ENCODE measurements at regions of chr1 and their contacts with region 1.

Region 1: GRCh38 chr1:20100632-20101355 is 18.5 kb downstream of the PLA2G2D start:
- DNase-seq: peak; percentile 77
- ATAC-seq: peak; percentile 79
- H3K4me3 ChIP-seq: no peak overlapping the region
- H3K27ac ChIP-seq: no peak overlapping the region
- H3K4me1 ChIP-seq: peaks cover 24% of the 10 kb centered on the region
- H3K27me3 ChIP-seq: no peaks in the 10 kb centered on the region
- CTCF ChIP-seq: peak; percentile 86

Region 2: GRCh38 chr1:19918057-19918456 is 182.7 kb before region 1 on chr1:
- CTCF ChIA-PET with region 1: no interaction called
- POLR2A ChIA-PET with region 1: no interaction called
- intact Hi-C with region 1: loop called (anchors 1 kb)
- DNase-seq: peak; percentile 89
- ATAC-seq: peak; percentile 74
- H3K4me3 ChIP-seq: no peak overlapping the region
- H3K27ac ChIP-seq: no peak overlapping the region
- H3K4me1 ChIP-seq: no peaks in the 10 kb centered on the region
- H3K27me3 ChIP-seq: no peaks in the 10 kb centered on the region
- CTCF ChIP-seq: peak; percentile 96

Region 3: DNA sequence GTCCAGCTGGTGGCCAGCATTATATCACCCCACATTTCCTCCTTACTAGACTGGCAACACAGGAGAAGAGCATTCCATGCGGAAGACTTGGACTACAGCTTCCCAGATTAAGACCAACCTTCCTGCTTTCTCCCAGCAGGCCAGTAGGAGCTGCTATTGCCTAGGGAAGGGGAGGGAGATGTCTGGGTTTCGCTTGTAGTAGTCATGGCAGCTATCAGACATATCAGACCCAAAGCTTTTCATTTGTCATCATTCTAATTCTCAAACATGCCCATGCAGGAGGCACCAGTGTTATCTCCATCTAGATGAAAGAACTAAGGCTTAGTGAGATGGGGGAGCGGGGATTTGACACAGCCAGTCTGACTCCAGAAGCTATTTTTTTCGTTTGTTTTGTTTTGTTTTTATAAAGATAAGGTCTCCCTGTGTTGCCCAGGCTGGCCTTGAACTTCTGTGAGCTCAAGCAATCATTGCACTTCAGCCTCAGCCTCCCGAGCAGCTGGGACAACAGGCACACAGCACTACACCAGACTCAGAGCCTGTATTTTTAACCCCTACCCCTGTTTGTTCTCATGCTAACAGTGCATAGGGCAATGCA is 125.9 kb before region 1 on chr1:
- CTCF ChIA-PET with region 1: interaction called, 3 read pairs
- POLR2A ChIA-PET with region 1: no interaction called
- intact Hi-C with region 1: loop called (anchors 5 kb)
- DNase-seq: peak; percentile 83
- ATAC-seq: peak; percentile 95
- H3K4me3 ChIP-seq: no peak overlapping the region
- H3K27ac ChIP-seq: no peak overlapping the region
- H3K4me1 ChIP-seq: peaks cover 7% of the 10 kb centered on the region
- H3K27me3 ChIP-seq: no peaks in the 10 kb centered on the region
- CTCF ChIP-seq: peak; percentile 93

Region 4: DNA sequence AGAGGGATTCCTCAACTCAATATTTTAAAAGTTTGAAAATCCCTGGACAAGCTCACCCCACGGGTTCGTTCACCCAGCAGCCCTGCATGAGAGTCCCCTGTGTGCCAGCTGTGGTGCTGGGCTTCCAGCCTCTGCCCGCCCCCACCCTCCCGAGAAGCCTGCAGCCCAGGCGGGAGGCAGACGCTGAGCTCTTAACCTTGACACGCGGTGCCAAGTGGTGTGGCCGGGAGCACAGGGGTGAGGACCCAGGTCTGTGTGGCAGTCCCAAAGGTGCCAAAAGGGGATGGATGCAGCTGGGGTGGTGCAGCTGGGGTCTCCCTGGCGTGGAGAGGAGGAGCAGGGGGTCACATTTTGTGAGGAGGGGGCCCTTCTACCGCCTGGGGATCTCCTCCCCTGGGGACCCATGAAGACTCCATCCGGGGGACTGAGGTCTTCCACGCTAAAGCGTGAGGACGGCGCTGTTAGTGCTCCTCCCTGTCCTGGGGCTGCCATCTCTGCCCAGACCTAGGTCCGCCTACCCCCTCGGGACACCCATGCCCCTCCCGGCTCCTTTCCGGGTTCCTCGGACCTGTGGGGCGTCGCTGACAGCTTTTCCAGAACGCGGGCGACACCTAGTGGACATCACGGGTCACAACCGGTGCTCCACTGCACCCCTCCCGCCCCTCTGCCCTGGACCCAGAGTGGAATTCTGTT is 51.3 kb after region 1 on chr1:
- CTCF ChIA-PET with region 1: no interaction called
- POLR2A ChIA-PET with region 1: no interaction called
- intact Hi-C with region 1: loop called (anchors 1 kb)
- DNase-seq: peak; percentile 80
- ATAC-seq: peak; percentile 95
- H3K4me3 ChIP-seq: peak overlapping the region; percentile 66
- H3K27ac ChIP-seq: no peak overlapping the region
- H3K4me1 ChIP-seq: 0 out of 2 replicates have a peak, but pooled peaks cover 5% of the 10 kb centered on the region
- H3K27me3 ChIP-seq: no peaks in the 10 kb centered on the region
- CTCF ChIP-seq: peak; percentile 89

Region 5: GRCh38 chr1:20194757-20195461 is 94.1 kb after region 1 on chr1:
- CTCF ChIA-PET with region 1: no interaction called
- POLR2A ChIA-PET with region 1: no interaction called
- intact Hi-C with region 1: loop called (anchors 1 kb)
- DNase-seq: peak; percentile 77
- ATAC-seq: peak; percentile 17
- H3K4me3 ChIP-seq: no peak overlapping the region
- H3K27ac ChIP-seq: peak overlapping the region; percentile 65
- H3K4me1 ChIP-seq: peaks cover 46% of the 10 kb centered on the region
- H3K27me3 ChIP-seq: no peaks in the 10 kb centered on the region
- CTCF ChIP-seq: peak; percentile 94